Common myeloid progenitor, CD34-positive (primary cell): ENCODE measurements at regions of chr1 and their contacts with region 1.

Region 1: GRCh38 chr1:28248283-28249012 is 10.9 kb upstream of the SESN2 start:
- DNase-seq: peak; percentile 81 to 90 (median 88)
- H3K4me3 ChIP-seq: peak overlapping the region in 5 of 7 experiments; percentile 24 to 68 (median 50)
- H3K27ac ChIP-seq: peak overlapping the region; percentile 56 to 95
- H3K4me1 ChIP-seq: peaks cover 28 to 60% (median 48%) of the 10 kb centered on the region in 4 experiments
- H3K27me3 ChIP-seq: no peaks in the 10 kb centered on the region

Region 2: GRCh38 chr1:28144203-28145135 is 104.0 kb before region 1 on chr1:
- CTCF ChIA-PET with region 1: no interaction called
- POLR2A ChIA-PET with region 1: no interaction called
- DNase-seq: no peak
- H3K4me3 ChIP-seq: no peak overlapping the region
- H3K27ac ChIP-seq: no peak overlapping the region
- H3K4me1 ChIP-seq: peaks cover 0 to 10% (median under 1%) of the 10 kb centered on the region in 4 experiments
- H3K27me3 ChIP-seq: no peaks in the 10 kb centered on the region

Region 3: DNA sequence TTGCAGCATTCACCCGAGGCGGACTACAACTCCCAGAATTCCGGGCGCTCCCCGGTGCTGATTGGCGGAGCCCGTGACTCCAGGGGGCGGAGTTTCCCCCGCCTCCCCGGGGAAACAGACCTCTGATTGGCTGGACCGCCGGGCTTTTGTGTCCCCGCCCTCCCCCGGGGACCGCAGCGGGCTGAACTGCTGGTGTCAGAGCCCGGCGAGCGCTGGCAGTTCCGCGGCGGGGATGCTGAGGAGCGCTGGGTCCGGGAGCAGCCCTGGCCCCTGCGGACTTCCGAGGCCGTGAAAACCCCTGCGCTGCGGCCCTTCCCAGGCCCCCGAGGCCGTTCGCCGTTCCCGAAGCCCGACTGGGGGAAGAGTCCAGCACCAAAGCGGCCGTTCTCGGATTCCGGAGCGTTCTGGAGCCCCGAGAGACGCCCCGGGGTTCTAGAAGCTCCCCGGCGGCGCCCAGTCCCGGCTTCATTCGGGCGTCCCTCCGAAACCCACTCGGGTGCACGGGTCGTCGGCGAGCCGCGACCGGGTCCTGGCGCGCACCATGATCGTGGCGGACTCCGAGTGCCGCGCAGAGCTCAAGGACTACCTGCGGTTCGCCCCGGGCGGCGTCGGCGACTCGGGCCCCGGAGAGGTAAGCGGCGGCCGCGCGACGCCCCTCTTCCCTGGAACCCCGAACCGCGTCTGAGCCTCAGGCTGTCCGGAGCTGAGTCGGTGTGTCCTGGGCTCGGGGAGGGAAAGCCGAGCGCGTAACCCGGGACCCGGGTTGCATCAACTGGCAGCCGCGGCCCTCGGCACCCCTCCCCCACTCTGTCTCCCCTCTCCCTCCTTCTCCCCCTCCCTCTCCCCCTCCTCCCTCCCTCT is 11.1 kb after region 1 on chr1 and contains the start of gene SESN2:
- CTCF ChIA-PET with region 1: interaction called, 15 read pairs
- POLR2A ChIA-PET with region 1: interaction called, 5 read pairs
- DNase-seq: peak; percentile 96 to 98 (median 98)
- H3K4me3 ChIP-seq: peak within 1 kb of the TSS; percentile 75 to 92 (median 91)
- H3K27ac ChIP-seq: peak within 1 kb of the TSS in 1 of 2 experiments; percentile 70
- H3K4me1 ChIP-seq: peaks cover 0 to 31% (median 22%) of the 10 kb centered on the region in 4 experiments
- H3K27me3 ChIP-seq: no peaks in the 10 kb centered on the region

Region 4: DNA sequence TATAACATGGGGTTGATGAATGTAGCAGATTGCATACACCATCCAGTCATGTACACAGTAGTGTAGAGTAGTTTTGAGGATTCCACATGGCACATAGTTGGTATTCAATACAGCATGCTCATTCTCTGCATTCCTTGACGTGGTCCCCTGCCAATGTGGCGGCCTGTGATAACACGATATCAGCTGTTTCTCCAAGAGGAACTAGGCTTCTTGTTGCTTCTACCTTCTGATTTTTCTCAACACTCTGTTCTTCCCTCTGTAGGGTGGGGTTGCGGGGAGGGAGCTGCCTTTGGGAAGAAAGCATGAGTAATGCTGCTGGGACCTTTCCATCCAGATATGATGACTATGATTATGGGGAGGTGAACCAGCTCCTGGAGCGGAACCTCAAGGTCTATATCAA is 30.3 kb after region 1 on chr1:
- CTCF ChIA-PET with region 1: no interaction called
- POLR2A ChIA-PET with region 1: no interaction called
- DNase-seq: peak in 2 of 3 donors; percentile 28 to 60
- H3K4me3 ChIP-seq: no peak overlapping the region
- H3K27ac ChIP-seq: no peak overlapping the region
- H3K4me1 ChIP-seq: peaks cover 0 to 9% (median 0%) of the 10 kb centered on the region in 4 experiments
- H3K27me3 ChIP-seq: no peaks in the 10 kb centered on the region

Region 5: DNA sequence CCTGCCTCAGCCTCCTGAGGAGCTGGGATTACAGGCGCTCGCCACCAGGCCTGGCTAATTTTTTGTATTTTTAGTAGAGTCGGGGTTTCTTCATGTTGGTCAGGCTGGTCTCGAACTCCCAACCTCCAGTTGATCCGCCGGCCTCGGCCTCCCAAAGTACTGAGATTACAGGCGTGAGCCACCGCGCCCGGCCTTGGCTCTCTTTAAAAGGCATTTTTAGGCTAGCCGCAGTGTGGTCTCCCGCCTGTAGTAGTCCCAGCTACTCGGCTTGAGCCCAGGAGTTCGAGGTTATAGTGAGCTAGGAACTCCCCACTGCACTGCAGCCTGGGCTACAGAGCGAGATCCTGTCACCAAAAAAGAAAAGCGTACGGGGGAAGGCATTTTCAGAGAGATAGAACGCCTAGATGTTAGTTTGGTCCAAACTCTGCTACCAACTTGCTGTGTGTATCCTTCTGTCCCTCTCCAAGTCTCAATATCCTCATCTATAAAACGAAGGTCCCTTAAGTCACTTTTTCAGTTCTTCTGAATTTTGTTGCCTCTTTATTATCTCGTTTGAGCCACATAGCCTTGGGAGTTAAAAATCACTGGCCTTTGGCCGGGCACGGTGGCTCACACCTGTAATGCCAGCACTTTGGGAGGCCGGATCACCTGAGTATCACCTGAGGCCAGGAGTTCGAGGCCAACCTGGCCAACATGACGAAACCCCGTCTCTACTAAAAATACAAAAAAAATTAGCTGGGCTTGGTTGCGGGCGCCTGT is 81.1 kb after region 1 on chr1:
- CTCF ChIA-PET with region 1: interaction called, 19 read pairs
- POLR2A ChIA-PET with region 1: interaction called, 10 read pairs
- DNase-seq: peak; percentile 52 to 78 (median 76)
- H3K4me3 ChIP-seq: peak overlapping the region; percentile 52 to 94 (median 83)
- H3K27ac ChIP-seq: peak overlapping the region; percentile 90 to 96
- H3K4me1 ChIP-seq: peaks cover 9 to 35% (median 19%) of the 10 kb centered on the region in 4 experiments
- H3K27me3 ChIP-seq: no peaks in the 10 kb centered on the region

Region 6: DNA sequence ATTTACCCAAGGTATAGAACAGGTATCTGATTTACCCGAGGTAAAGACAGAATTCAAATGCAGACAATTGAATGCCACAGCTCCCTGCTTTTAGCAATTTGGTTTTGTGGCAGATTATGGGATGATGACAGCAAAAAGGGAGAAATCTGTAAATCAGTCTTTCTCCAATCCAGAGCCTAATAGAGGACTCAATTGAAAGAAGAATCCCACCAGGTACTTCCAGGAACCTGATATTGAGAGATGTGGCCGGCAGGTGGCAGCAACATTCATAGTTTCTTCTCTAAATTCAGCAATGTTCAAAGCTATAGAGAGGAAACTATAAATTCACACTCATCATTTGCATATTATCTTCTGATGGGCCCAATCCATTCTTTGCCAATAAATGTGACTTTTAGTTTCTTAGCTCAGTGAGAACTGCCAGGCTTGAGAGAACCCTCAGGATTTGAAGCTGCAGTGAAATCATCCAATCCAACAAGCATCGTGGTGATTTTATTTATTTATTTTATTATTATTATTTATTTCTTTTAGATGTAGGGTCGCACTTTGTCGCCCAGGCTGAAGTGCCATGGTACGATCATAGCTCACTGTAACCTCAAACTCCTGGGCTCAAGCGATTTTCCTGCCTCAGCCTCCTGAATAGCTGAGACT is 111.3 kb after region 1 on chr1:
- CTCF ChIA-PET with region 1: interaction called, 17 read pairs
- POLR2A ChIA-PET with region 1: no interaction called
- DNase-seq: peak; percentile 71 to 86 (median 80)
- H3K4me3 ChIP-seq: no peak overlapping the region
- H3K27ac ChIP-seq: no peak overlapping the region
- H3K4me1 ChIP-seq: peaks cover 0 to 2% (median 0%) of the 10 kb centered on the region in 4 experiments
- H3K27me3 ChIP-seq: no peaks in the 10 kb centered on the region